Naive thymus-derived CD4-positive, alpha-beta T cell (primary cell): ENCODE measurements at regions of chr19 and their contacts with region 1.

Region 1: GRCh38 chr19:52007806-52008557 is at the start of gene ZNF615:
- DNase-seq: peak; percentile 80 to 96 (median 85)
- ATAC-seq: peak; percentile 97
- H3K4me3 ChIP-seq: peak within 1 kb of the TSS; percentile 89
- H3K4me3 Mint-ChIP-seq: peak within 1 kb of the TSS; percentile 92 to 98 (median 98)
- H3K27ac ChIP-seq: peak within 1 kb of the TSS; percentile 83
- H3K27ac Mint-ChIP-seq: peak within 1 kb of the TSS; percentile 91 to 99 (median 95)
- H3K4me1 ChIP-seq: peaks cover 7% of the 10 kb centered on the region in 2 donors
- H3K4me1 Mint-ChIP-seq: peaks cover 15 to 33% (median 21%) of the 10 kb centered on the region in 7 donors
- H3K27me3 ChIP-seq: no peaks in the 10 kb centered on the region
- H3K27me3 Mint-ChIP-seq: no peaks in the 10 kb centered on the region
- total RNA-seq, gene ZNF615: 8.7 to 20.9 (median 11.0) TPM

Region 2: DNA sequence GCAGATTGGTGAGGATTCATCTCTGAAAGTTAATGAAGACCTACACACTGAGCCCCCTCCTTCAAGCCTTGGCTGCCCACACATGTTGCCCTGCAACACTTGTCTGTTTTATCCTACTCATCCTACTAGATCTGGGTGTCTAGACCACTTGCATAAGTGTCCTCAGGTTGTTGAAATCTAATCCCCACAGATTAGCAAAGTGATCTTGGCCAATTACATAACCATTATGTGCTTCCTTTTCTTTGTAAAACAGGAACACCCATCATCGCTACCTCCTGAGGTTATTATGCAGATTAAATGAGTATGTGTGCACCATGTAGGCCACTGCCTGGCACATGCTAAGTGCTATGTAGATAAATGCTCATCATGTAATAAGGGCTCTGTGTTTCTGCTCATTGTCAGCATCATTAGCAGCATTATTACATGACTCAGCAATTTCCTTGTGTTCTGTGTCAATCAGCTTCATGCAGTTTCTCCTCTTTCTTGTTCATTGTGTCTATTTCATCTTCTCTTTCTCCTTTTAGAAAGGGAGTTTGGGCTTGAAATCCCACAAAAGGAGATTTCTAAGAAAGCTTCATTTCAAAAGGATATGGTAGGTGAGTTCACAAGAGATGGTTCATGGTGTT is 421.8 kb before region 1 on chr19:
- CTCF ChIA-PET with region 1: no interaction called
- POLR2A ChIA-PET with region 1: no interaction called
- intact Hi-C with region 1: no loop called
- DNase-seq: no peak
- ATAC-seq: peak; percentile 56
- H3K4me3 ChIP-seq: no peak overlapping the region
- H3K4me3 Mint-ChIP-seq: no peak overlapping the region
- H3K27ac ChIP-seq: no peak overlapping the region
- H3K27ac Mint-ChIP-seq: no peak overlapping the region
- H3K4me1 ChIP-seq: no peaks in the 10 kb centered on the region
- H3K4me1 Mint-ChIP-seq: peaks cover 0 to 2% (median 0%) of the 10 kb centered on the region in 7 donors
- H3K27me3 ChIP-seq: no peaks in the 10 kb centered on the region
- H3K27me3 Mint-ChIP-seq: no peaks in the 10 kb centered on the region

Region 3: GRCh38 chr19:51904331-51905165 is 103.4 kb before region 1 on chr19 and contains the start of gene ZNF649:
- CTCF ChIA-PET with region 1: no interaction called
- POLR2A ChIA-PET with region 1: no interaction called
- intact Hi-C with region 1: loop called (anchors 1 kb)
- DNase-seq: peak; percentile 67 to 84 (median 74)
- ATAC-seq: peak; percentile 98
- H3K4me3 ChIP-seq: peak within 1 kb of the TSS; percentile 84
- H3K4me3 Mint-ChIP-seq: peak within 1 kb of the TSS; percentile 87 to 100 (median 99)
- H3K27ac ChIP-seq: peak within 1 kb of the TSS; percentile 84
- H3K27ac Mint-ChIP-seq: peak within 1 kb of the TSS; percentile 89 to 99 (median 97)
- H3K4me1 ChIP-seq: peaks cover 0 to 5% of the 10 kb centered on the region in 2 donors
- H3K4me1 Mint-ChIP-seq: peaks cover 8 to 33% (median 28%) of the 10 kb centered on the region in 7 donors
- H3K27me3 ChIP-seq: no peaks in the 10 kb centered on the region
- H3K27me3 Mint-ChIP-seq: peaks cover 0 to 31% (median 19%) of the 10 kb centered on the region in 5 donors
- total RNA-seq, gene ZNF649: 11.1 to 33.4 (median 14.5) TPM

Region 4: DNA sequence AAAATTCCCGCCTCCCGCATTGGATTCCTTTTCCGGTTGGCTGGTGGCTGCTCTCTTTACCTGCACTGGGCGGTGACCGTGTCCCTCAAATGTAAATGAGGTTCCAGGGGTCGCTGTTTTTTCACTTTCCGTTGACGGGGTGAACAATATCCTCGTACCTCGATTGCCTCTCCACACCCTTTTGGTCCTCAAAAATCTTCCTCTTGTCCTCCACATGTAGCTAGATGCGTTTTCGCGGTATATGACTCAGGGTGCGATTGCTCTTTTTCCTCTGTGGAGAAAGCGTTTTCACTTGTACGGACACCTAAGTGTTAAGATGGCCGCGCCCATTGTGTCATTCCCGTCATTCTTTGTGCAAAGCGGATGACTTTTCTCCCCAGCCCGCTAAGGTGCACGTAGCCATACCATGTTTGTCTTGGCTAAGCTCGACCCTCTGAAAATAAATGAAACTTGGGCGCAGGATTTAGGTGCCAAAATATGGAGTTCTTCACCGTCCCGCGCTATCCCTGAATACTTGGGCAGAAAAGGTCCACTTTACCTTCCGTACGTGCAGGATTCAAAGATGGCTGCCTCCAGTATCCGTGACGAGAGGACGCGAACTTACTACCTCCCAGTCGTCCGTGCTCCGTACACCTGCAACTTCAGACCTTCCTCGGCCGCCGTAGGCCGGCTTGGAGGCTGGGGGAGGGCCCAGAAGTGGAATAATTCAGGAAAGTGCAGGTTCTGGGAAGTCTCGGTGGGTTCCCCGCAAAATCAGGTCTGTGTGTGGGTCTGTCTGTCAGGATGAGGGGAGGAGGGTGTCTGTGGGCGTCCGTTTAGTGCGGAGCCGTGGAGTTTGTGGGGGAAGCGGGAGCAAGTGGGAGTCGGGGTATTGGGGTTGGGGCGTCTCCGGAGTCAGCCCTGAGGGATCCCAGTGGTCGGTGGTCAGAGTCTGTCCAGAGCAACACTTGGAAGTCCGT is 80.9 kb before region 1 on chr19 and contains the start of gene ZNF613:
- CTCF ChIA-PET with region 1: no interaction called
- POLR2A ChIA-PET with region 1: no interaction called
- intact Hi-C with region 1: loop called (anchors 1 kb)
- DNase-seq: peak; percentile 65 to 87 (median 83)
- ATAC-seq: peak; percentile 92
- H3K4me3 ChIP-seq: peak within 1 kb of the TSS; percentile 70
- H3K4me3 Mint-ChIP-seq: peak within 1 kb of the TSS; percentile 90 to 100 (median 97)
- H3K27ac ChIP-seq: peak within 1 kb of the TSS; percentile 77
- H3K27ac Mint-ChIP-seq: peak within 1 kb of the TSS; percentile 87 to 96 (median 92)
- H3K4me1 ChIP-seq: peaks cover 4% of the 10 kb centered on the region in 2 donors
- H3K4me1 Mint-ChIP-seq: peaks cover 19 to 41% (median 36%) of the 10 kb centered on the region in 7 donors
- H3K27me3 ChIP-seq: no peaks in the 10 kb centered on the region
- H3K27me3 Mint-ChIP-seq: no peaks in the 10 kb centered on the region
- total RNA-seq, gene ZNF613: 1.5 to 9.6 (median 5.2) TPM

Region 5: GRCh38 chr19:52237771-52238400 is 229.9 kb after region 1 on chr19:
- CTCF ChIA-PET with region 1: no interaction called
- POLR2A ChIA-PET with region 1: no interaction called
- intact Hi-C with region 1: loop called in 1 of 2 experiments (anchors 5 kb)
- DNase-seq: peak in 8 of 9 donors; percentile 26 to 60 (median 50)
- ATAC-seq: peak; percentile 88
- H3K4me3 ChIP-seq: no peak overlapping the region
- H3K4me3 Mint-ChIP-seq: no peak overlapping the region
- H3K27ac ChIP-seq: no peak overlapping the region
- H3K27ac Mint-ChIP-seq: peak overlapping the region in 1 of 9 donors; percentile 26
- H3K4me1 ChIP-seq: no peaks in the 10 kb centered on the region
- H3K4me1 Mint-ChIP-seq: peaks cover 0 to 6% (median 0%) of the 10 kb centered on the region in 7 donors
- H3K27me3 ChIP-seq: no peaks in the 10 kb centered on the region
- H3K27me3 Mint-ChIP-seq: peaks cover 0 to 2% (median 0%) of the 10 kb centered on the region in 5 donors